ENCODE measurements at regions of chr10 and their contacts with region 1.

Region 1: DNA sequence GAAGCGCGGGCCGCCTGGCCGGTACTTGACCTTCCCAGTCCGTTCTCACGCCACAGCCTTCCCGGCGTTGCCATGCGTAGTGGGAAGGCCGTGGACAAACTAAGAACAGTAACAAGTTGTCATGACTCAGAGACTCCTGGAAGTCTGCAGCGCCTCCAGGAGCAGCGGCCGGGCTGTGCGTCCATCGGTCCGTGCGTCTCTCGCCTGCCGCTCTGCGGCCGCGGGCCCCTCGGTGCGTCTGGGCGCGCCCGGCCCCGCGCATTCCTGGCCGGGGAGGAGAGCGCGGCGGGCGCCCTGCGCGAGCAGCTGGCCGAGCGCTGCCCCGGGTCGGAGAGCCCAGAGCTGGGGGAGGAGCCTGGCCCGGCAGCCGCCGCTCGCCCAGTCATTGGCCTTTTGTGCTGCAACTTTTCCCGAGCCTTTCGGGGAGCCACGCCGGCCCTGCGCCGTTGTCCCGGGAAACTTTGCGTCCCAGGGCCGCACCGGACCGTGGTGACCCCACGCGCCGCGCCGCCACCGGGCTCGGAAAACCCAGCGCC is 123.7 kb downstream of the TACC2 start:
- DNase-seq: peak; percentile 87
- H3K4me3 ChIP-seq: peak overlapping the region; percentile 55 to 56
- H3K27ac ChIP-seq: peak overlapping the region; percentile 96 to 99
- H3K4me1 ChIP-seq: peaks cover 3% of the 10 kb centered on the region
- H3K27me3 ChIP-seq: no peaks in the 10 kb centered on the region
- CTCF ChIP-seq: peak; percentile 47 to 91 (median 76)
- POLR2A ChIP-seq: peak; percentile 86

Region 2: DNA sequence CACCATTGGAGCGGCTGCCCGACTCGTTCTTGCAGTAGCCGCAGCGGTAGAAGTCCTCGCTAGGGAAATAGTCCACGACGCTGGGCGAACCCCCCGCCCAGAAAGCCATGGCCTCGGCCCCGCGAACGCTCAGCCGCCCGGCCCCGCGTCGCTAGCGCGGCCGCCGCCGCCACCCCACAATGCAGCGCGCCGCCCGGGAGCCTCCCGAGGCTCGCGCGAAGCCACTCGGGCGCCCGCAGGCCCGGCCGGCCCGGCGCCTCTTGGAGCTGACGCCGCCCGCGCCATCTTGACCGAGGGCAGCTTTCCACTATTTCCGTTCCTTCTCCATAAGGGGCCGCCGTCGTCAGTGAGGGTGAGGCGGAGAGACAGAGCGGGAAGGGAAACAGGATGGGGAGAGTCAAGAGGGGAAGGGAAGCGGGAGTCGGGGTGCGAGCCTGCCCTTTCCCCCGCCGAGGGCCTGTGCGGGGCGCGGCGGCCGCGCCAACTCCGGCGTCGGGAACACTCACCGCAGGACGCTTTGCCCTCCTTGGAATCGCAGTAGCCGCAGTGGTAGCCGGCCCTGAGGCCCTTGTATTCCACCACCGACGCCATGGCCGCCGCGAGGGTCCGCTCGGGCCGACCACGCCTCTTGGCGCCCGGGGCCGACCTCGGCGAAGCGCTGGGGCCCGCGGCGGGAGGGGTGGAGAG is 184.7 kb before region 1 on chr10 and contains the start of gene ATE1:
- intact Hi-C with region 1: loop called (anchors 2 kb)
- DNase-seq: peak; percentile 89
- H3K4me3 ChIP-seq: peak within 1 kb of the TSS; percentile 97 to 98
- H3K27ac ChIP-seq: peak within 1 kb of the TSS; percentile 99 to 100
- H3K4me1 ChIP-seq: peaks cover 4% of the 10 kb centered on the region
- H3K27me3 ChIP-seq: no peaks in the 10 kb centered on the region
- CTCF ChIP-seq: peak in 2 of 4 experiments; percentile 27 to 29
- POLR2A ChIP-seq: peak; percentile 83
- total RNA-seq, gene ATE1: 29.9 to 36.2 TPM

Region 3: DNA sequence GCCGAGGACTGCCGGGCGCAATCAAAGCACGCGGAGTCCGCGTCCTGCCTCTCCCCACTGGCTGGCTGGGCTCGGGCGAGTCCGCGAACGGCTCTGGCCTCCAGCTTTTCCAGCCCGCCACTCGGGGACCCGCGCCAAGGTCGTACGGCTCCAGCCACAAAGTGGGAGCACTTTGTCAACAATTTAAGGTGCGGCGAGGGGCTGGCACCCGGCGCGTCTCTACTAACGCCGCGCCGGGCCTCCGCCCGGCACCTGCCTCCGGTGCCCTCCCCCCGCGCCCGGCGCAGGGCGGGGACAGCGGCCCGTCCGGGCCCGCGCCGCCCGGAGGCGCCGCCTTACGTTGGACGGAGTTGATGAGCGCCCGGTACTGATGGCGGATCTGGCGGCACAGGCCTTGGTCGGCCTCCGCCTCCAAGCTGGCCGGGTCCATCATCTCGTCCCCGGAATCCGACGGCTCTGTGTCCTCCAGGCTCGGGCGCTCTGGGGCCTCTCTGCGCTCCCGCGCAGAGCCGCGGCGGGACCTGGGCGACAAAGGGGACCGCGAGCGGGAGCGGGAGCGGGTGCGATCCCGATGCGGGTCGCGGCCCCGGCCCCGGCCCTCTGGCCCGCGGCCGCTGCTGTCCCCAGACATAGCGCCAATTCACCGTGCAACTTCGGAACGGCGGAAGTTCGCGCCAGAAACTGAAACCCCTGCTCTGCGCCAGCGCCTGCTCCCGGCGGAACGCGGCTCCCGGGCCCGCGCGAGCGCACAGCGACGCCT is 138.0 kb before region 1 on chr10 and contains the start of gene NSMCE4A:
- intact Hi-C with region 1: loop called (anchors 5 kb)
- DNase-seq: peak; percentile 70
- H3K4me3 ChIP-seq: peak within 1 kb of the TSS; percentile 78 to 94
- H3K27ac ChIP-seq: peak within 1 kb of the TSS; percentile 99
- H3K4me1 ChIP-seq: no peaks in the 10 kb centered on the region
- H3K27me3 ChIP-seq: no peaks in the 10 kb centered on the region
- CTCF ChIP-seq: peak in 3 of 4 experiments; percentile 56 to 81 (median 78)
- POLR2A ChIP-seq: peak; percentile 43
- total RNA-seq, gene NSMCE4A: 90.1 to 105 TPM

Region 4: DNA sequence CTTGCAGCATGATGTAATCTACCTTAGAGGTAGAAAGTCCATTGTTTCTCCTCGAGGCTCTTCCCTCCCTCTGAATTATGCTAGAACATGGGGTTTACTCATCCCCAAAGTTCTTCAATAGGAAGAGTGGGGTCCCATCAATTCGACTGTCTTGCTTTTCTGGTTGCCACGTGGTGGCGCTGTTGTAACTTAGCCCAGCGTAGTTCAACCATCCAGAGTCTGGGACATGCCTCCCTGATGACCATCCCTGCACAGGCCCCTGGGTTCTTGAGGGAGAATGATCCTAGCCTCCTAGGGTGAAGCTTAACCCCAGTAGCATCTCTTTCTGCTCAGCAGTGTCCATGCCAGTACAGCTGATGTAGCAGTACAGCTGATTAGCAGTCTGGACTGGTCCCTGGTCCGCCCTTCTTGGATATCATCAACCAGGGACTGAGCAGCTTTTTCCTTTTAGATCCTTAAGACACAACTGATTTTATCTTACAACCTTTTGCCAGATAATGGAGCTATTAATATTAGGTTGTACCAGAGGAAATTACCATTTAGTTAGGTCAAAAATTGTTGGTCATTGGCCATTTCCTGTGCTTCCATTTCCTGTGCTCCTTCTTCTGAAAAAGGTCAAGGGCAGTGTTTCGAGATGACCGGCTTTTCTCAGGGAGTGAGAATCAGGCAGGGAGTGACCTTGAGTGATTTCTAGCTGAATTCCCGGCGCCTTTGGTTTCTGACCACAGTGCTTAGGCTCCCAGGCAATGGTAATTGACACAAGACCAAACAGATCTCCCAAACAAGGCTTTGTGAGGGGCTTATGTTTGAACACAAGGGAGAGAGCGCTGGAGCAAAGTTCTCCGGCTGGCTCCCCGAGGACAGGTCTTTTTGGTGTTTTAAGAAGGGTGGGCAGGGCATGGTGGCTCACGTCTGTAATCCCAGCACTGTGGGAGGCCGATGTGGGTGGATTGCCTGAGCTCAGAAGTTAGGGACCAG is 58.4 kb before region 1 on chr10:
- intact Hi-C with region 1: loop called (anchors 2 kb)
- DNase-seq: no peak
- H3K4me3 ChIP-seq: no peak overlapping the region
- H3K27ac ChIP-seq: peak overlapping the region; percentile 54 to 55
- H3K4me1 ChIP-seq: no peaks in the 10 kb centered on the region
- H3K27me3 ChIP-seq: no peaks in the 10 kb centered on the region
- CTCF ChIP-seq: peak; percentile 33 to 73 (median 64)
- POLR2A ChIP-seq: no peak